Esophagus squamous epithelium (tissue), 5 donors: ENCODE measurements at regions of chr7 and their contacts with region 1.

Region 1: DNA sequence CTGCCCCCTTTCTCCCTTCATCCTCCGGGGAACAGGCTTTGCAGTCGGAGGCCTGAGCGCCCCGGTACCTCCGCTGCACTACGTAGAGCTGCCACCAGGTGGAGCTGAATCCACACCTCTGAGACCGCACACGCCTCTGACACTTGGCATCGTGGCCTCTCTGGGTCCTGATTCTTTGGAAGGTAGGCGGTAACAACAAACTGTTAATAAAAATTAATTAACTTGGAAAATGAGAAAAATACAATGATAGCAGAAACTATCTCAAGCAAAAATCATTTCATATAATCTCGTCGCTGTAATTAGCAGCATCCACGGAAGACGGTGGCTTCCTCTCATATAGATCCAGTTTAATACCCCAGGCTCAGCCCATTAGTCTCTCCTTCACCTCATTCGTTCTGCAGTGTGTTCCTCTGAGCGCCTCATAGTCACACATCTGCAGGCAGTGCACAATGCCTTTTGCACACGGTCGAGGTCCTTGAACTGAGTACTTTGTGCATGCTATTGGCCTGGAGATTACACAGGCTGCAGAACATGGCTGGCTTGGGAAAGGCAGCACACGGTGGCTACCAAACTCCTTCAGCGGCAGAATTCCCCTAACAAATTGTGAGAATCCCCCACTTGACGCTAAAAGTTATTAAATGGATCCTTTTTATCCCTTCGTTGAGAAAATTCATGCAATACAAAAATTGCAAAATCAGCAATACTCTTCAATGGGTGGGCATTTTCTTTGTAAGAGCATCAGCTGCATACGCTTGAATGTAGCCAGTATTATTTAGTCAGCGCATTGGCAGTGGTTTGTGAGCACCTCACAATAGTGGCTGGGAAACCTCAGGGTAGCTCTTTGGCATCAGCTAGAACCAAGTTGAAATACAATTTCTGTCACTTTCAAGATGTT is 18.7 kb downstream of the OR9A2 start:
- DNase-seq: peak; percentile 18
- H3K4me3 ChIP-seq: no peak overlapping the region
- H3K27ac ChIP-seq: no peak overlapping the region
- H3K4me1 ChIP-seq: peaks cover 0 to 23% (median 1%) of the 10 kb centered on the region in 3 donors
- H3K27me3 ChIP-seq: peaks cover 0 to 14% (median 0%) of the 10 kb centered on the region in 4 donors
- CTCF ChIP-seq: peak; percentile 93 to 98 (median 97)
- POLR2A ChIP-seq: no peak

Region 2: DNA sequence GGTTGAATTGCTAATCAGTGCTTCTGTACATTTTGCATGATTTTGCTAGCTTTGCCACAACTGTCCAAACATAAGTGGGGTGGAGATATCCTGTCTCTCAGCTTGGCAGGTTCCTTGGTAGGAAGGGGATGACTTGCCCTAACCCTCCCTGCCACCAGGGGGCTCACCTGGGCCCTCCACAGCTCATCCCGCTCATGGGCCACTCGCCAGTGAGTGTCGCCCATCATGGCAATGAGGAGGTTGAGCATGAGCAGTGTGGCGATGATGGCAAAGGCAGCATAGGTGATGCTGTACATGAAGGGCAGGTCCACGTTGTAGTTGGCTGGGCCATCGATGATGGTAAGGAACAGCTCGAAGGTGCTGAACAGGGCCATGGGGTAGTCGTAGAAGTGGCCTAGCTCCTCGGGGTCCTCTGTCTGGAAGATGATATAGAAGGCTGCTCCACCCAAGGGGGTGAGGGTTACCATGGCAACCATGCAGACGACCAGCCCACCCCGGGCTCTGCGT is 134.9 kb before region 1 on chr7:
- intact Hi-C with region 1: loop called (anchors 10 kb)
- DNase-seq: no peak
- H3K4me3 ChIP-seq: no peak overlapping the region
- H3K27ac ChIP-seq: no peak overlapping the region
- H3K4me1 ChIP-seq: no peaks in the 10 kb centered on the region
- H3K27me3 ChIP-seq: peaks cover 0 to 5% (median 0%) of the 10 kb centered on the region in 4 donors
- CTCF ChIP-seq: peak in 5 of 6 experiments; percentile 46 to 76 (median 56)
- POLR2A ChIP-seq: no peak

Region 3: GRCh38 chr7:143214789-143215679 is 206.8 kb after region 1 on chr7:
- intact Hi-C with region 1: loop called (anchors 2 kb)
- DNase-seq: no peak
- H3K4me3 ChIP-seq: no peak overlapping the region
- H3K27ac ChIP-seq: no peak overlapping the region
- H3K4me1 ChIP-seq: no peaks in the 10 kb centered on the region
- H3K27me3 ChIP-seq: peaks cover 0 to 4% (median 0%) of the 10 kb centered on the region in 4 donors
- CTCF ChIP-seq: peak; percentile 92 to 99 (median 99)
- POLR2A ChIP-seq: no peak